ENCODE measurements at regions of chr20 and their contacts with region 1.

Region 1: DNA sequence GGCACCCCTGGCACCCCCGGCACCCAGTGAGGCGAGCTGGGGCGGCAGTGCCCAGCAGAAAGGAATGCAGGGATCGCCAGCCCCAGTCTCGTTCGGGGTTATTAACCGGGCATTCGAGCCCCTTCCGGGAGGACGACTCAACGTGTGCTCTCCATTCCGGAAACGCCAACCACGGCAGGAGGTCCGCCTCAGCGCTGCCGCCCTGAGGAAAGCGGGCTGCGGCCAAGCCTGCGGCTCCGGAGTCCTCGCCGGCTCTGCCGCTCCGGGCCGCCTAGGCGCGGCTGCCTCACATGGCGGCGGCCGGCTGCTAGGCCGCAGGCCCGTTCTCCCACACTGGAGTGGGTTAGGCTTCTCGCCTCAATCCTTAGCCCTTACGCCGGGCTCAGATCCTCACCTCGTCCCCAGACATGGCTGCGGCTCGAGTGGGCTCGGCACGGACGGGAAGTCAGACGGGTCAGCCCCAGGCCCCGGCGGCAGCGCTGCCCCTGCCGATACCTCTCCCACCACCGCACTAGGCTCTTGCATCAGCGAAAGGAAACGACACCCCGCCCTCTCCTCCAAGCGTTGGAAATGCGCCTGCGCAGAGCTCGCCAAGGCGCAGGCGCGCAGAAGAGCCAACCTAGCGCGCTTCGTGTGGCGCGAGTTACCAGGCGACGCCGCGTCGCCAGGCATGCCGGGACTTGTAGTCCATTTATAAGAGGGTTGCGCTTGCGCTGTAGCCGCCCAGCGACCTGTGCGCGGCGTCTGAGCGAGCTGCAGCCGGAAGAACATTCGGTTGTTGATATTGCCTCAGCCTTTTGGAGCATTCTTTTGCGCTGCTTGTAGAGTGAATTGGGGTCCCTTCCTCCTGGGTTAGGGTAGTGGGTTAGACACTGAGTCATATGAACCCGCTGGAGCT is at the start of gene EIF2S2:
- DNase-seq: peak; percentile 91 to 98 (median 94)
- ATAC-seq: peak; percentile 91 to 92
- H3K4me3 Mint-ChIP-seq: peak within 1 kb of the TSS; percentile 90 to 99 (median 96)
- H3K27ac Mint-ChIP-seq: peak within 1 kb of the TSS; percentile 96 to 100 (median 98)
- H3K4me1 Mint-ChIP-seq: peaks cover 23 to 51% (median 43%) of the 10 kb centered on the region in 4 donors
- H3K27me3 Mint-ChIP-seq: no peaks in the 10 kb centered on the region
- polyA plus RNA-seq, gene EIF2S2: 17.5 to 21.6 (median 20.2) TPM

Region 2: DNA sequence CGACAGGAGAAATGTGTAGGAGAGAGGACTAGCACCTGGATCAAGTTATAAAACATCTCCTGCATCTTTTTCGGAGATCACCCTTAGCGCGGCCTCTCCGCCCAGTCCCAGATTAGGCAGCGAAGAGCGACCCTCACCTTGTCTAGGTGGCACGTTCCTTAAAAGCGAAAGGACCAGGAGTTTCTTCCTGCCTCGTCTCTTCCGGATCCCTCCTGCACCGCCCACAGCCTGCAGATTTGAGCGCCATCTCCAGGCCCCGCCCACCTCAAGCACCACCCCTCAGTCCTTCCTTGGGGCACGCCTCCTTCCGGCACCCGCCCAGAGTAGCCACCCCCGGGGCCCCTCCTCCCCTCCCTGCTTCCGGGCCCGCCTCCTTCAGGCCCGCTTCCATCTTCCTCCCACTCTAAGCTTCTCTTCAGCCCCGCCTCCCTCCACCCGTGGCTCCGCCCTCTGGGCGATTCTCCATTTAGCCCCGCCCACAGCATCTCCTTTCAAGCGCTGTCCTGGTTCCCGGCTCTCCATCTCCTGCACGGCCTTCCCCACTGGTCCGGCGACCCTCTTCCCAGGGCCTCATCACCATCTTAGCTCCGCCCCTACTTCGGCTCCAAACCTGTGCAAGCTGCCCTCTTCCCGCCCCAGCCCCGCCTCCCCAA is 118.9 kb before region 1 on chr20:
- POLR2A ChIA-PET with region 1: interaction called, 46 read pairs
- DNase-seq: peak; percentile 98 to 100 (median 99)
- ATAC-seq: peak; percentile 77 to 80
- H3K4me3 Mint-ChIP-seq: peak overlapping the region; percentile 96 to 100 (median 98)
- H3K27ac Mint-ChIP-seq: peak overlapping the region; percentile 95 to 99 (median 99)
- H3K4me1 Mint-ChIP-seq: peaks cover 25 to 68% (median 64%) of the 10 kb centered on the region in 4 donors
- H3K27me3 Mint-ChIP-seq: no peaks in the 10 kb centered on the region

Region 3: DNA sequence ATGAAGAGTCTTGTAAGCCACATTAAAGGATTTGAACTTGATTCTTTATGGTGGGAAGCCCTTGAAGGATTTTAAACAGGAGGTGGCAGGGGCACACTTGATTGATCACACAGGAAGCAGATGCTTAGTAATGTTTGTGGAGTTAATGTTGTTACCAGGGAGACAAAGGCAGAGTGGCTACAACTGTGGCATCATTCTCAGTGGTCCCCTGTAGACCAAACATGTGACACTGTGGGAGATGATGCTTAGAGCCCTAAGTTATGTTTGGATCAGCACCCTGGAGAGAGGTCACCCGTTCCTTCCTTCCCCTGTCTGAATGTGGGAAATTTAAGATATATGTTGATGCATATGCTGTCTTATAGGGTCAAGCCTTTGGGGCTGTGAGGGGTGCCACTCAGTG is 53.1 kb before region 1 on chr20:
- POLR2A ChIA-PET with region 1: no interaction called
- DNase-seq: peak in 8 of 10 donors; percentile 16 to 74 (median 46)
- ATAC-seq: peak; percentile 89 to 94
- H3K4me3 Mint-ChIP-seq: peak overlapping the region in 2 of 10 donors; percentile 0 to 39
- H3K27ac Mint-ChIP-seq: peak overlapping the region; percentile 3 to 91 (median 70)
- H3K4me1 Mint-ChIP-seq: peaks cover 50 to 91% (median 88%) of the 10 kb centered on the region in 4 donors
- H3K27me3 Mint-ChIP-seq: no peaks in the 10 kb centered on the region

Region 4: GRCh38 chr20:34083137-34083536 is 28.8 kb before region 1 on chr20:
- POLR2A ChIA-PET with region 1: interaction called, 10 read pairs
- DNase-seq: no peak
- ATAC-seq: no peak
- H3K4me3 Mint-ChIP-seq: no peak overlapping the region
- H3K27ac Mint-ChIP-seq: peak overlapping the region; percentile 3 to 92 (median 47)
- H3K4me1 Mint-ChIP-seq: peaks cover 4 to 29% (median 20%) of the 10 kb centered on the region in 4 donors
- H3K27me3 Mint-ChIP-seq: no peaks in the 10 kb centered on the region

Region 5: GRCh38 chr20:34141294-34141693 is 29.3 kb after region 1 on chr20:
- POLR2A ChIA-PET with region 1: no interaction called
- DNase-seq: no peak
- ATAC-seq: no peak
- H3K4me3 Mint-ChIP-seq: no peak overlapping the region
- H3K27ac Mint-ChIP-seq: no peak overlapping the region
- H3K4me1 Mint-ChIP-seq: no peaks in the 10 kb centered on the region
- H3K27me3 Mint-ChIP-seq: peaks cover 6 to 21% (median 8%) of the 10 kb centered on the region in 5 donors

Region 6: GRCh38 chr20:34190679-34191090 is 78.7 kb after region 1 on chr20:
- POLR2A ChIA-PET with region 1: no interaction called
- DNase-seq: peak in 4 of 10 donors; percentile 25 to 64 (median 30)
- ATAC-seq: no peak
- H3K4me3 Mint-ChIP-seq: no peak overlapping the region
- H3K27ac Mint-ChIP-seq: peak overlapping the region in 1 of 10 donors; percentile 47
- H3K4me1 Mint-ChIP-seq: peaks cover 0 to 2% (median 0%) of the 10 kb centered on the region in 4 donors
- H3K27me3 Mint-ChIP-seq: peaks cover 0 to 18% (median 7%) of the 10 kb centered on the region in 5 donors